Activated CD4-positive, alpha-beta T cell treated with anti-CD3 and anti-CD28 coated beads for 36 hours (primary cell): ENCODE measurements at regions of chr17 and their contacts with region 1.

Region 1: GRCh38 chr17:3647769-3648555 is 11.4 kb downstream of the CTNS start:
- DNase-seq: peak; percentile 79
- ATAC-seq: peak; percentile 82
- H3K4me3 Mint-ChIP-seq: no peak overlapping the region
- H3K27ac Mint-ChIP-seq: peak overlapping the region; percentile 33
- H3K4me1 Mint-ChIP-seq: peaks cover 9% of the 10 kb centered on the region
- H3K27me3 Mint-ChIP-seq: no peaks in the 10 kb centered on the region

Region 2: GRCh38 chr17:2828397-2829038 is 819.4 kb before region 1 on chr17:
- CTCF ChIA-PET with region 1: no interaction called
- POLR2A ChIA-PET with region 1: no interaction called
- intact Hi-C with region 1: loop called in 1 of 2 experiments (anchors 10 kb)
- DNase-seq: peak; percentile 89
- ATAC-seq: peak; percentile 88
- H3K4me3 Mint-ChIP-seq: no peak overlapping the region
- H3K27ac Mint-ChIP-seq: no peak overlapping the region
- H3K4me1 Mint-ChIP-seq: peaks cover 12% of the 10 kb centered on the region
- H3K27me3 Mint-ChIP-seq: no peaks in the 10 kb centered on the region

Region 3: DNA sequence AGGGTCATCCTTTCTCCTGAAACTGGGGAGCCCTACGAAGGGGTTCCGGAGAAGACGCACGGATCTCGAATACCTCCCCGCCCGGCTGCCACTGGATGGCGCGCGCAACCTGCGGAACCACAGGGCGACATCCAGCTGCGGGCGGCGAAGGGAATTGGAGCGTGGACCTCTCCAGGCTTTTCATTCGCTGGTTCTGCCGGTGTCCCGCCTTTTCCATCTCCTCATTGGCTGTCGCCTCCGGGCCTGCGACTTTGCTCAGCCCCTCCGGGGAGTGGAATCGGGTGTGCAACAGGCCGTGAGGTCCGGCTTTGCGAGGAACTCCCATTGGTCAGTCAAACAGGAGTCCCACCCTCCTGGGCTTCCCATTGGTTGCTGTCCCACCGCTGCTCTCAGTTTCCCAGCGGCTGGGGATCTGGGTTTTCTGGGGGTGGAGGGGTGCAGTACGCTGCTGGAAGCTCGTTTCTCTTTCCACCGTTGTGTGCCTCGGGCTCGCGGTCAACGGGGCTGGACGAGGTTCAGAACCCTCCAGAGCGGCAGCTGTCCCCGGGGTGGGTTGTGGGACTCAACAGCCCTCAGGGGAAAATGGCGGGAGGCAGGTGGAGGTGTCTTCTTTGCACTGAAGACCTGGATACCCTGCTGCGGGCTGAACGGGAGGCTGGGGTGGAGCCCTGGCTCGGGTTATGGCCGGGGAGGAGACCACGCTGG is 599.0 kb before region 1 on chr17:
- CTCF ChIA-PET with region 1: interaction called, 6 read pairs
- POLR2A ChIA-PET with region 1: no interaction called
- intact Hi-C with region 1: loop called in 1 of 2 experiments (anchors 1 kb)
- DNase-seq: peak; percentile 98
- ATAC-seq: peak; percentile 99
- H3K4me3 Mint-ChIP-seq: peak overlapping the region; percentile 86
- H3K27ac Mint-ChIP-seq: peak overlapping the region; percentile 83
- H3K4me1 Mint-ChIP-seq: peaks cover 4% of the 10 kb centered on the region
- H3K27me3 Mint-ChIP-seq: no peaks in the 10 kb centered on the region

Region 4: DNA sequence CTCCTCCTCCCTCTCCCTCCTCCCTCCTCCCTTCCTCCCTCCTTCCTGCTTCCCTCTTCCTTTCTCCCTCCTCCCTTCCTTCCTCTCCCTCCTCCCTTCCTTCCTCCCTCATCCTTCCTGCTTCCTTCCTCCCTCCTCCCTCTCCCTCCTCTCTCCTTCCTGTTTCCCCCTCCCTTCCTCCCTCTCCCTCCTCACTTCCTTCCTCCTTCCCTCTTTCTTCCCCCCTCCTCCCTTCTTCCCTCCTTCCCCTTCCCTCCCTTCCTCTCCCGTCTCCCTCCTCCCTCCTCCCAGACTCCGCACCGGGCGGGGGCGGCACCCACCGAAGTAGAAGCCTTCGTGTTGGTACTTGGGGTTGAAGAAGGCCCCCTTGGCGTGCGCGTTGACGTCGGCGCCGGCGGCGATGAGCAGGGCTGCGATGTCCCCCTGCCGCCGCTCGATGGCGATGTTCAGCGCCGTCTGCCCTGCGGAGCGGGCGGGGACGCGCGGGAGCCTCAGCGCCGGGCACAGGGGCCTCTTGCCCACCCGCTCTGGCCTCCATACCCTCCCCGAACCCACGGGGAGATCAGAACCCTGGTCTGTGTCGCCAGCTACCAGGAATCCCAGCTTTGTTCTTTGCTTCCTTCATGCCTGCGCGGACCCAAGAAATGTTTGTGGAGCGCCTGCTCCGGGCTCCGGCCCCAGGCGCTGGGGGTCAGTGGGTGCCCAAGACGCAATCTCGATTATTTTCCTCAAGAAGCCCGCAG is 112.5 kb before region 1 on chr17:
- CTCF ChIA-PET with region 1: no interaction called
- POLR2A ChIA-PET with region 1: no interaction called
- intact Hi-C with region 1: loop called in 1 of 2 experiments (anchors 1 kb)
- DNase-seq: peak; percentile 84
- ATAC-seq: peak; percentile 96
- H3K4me3 Mint-ChIP-seq: peak overlapping the region; percentile 21
- H3K27ac Mint-ChIP-seq: no peak overlapping the region
- H3K4me1 Mint-ChIP-seq: peaks cover 5% of the 10 kb centered on the region
- H3K27me3 Mint-ChIP-seq: peaks cover 3% of the 10 kb centered on the region

Region 5: GRCh38 chr17:3602499-3602898 is 45.5 kb before region 1 on chr17:
- CTCF ChIA-PET with region 1: interaction called, 5 read pairs
- POLR2A ChIA-PET with region 1: no interaction called
- intact Hi-C with region 1: loop called (anchors 1 to 5 kb)
- DNase-seq: peak; percentile 50
- ATAC-seq: no peak
- H3K4me3 Mint-ChIP-seq: no peak overlapping the region
- H3K27ac Mint-ChIP-seq: no peak overlapping the region
- H3K4me1 Mint-ChIP-seq: no peaks in the 10 kb centered on the region
- H3K27me3 Mint-ChIP-seq: no peaks in the 10 kb centered on the region

Region 6: GRCh38 chr17:3796110-3796821 is 148.3 kb after region 1 on chr17:
- CTCF ChIA-PET with region 1: no interaction called
- POLR2A ChIA-PET with region 1: no interaction called
- intact Hi-C with region 1: no loop called
- DNase-seq: peak; percentile 80
- ATAC-seq: peak; percentile 75
- H3K4me3 Mint-ChIP-seq: no peak overlapping the region
- H3K27ac Mint-ChIP-seq: peak overlapping the region; percentile 43
- H3K4me1 Mint-ChIP-seq: peaks cover 29% of the 10 kb centered on the region
- H3K27me3 Mint-ChIP-seq: no peaks in the 10 kb centered on the region